Left colon (tissue), 2 donors: ENCODE measurements at regions of chr7 and their contacts with region 1.

Region 1: GRCh38 chr7:134140889-134141867 is 14.0 kb downstream of the LRGUK start:
- DNase-seq: peak; percentile 37 to 73
- ATAC-seq: peak; percentile 81

Region 2: GRCh38 chr7:134212576-134213546 is 71.7 kb after region 1 on chr7:
- intact Hi-C with region 1: no loop called
- DNase-seq: no peak
- ATAC-seq: no peak

Region 3: DNA sequence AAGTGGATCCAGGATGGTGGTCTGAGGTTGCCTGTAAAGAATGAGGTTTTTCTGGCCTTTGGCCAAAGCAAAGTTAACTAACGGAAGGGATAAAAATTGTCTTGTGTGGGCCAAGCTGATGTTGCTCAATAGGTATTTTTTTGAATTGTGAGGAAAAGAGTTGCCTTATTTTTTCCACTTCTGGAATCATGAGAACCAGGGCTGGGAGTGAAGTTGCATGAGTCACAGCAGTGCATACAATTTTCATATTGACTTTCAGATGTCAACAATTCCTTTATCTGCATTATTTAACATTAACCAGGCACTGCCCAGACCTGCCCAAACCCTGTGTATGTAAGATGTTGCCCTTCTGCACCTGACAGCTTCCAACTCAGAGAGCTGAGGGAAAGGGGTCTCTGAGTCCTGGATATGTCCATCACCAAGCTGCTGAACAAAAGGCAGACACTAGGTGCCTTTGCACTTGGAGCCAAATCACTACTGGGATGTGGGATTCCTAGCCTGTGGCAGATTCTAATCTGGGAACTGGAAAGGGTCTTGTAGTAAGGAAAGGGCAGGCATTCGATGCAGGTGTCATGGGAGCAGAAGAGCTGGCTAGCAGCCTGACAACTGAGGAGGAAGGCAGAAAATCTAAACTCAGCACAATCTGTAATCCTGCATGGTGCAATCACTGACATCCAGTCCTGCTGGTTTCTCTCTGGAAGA is 227.8 kb after region 1 on chr7:
- intact Hi-C with region 1: loop called in 1 of 2 experiments (anchors 10 kb)
- DNase-seq: no peak
- ATAC-seq: peak; percentile 76

Region 4: DNA sequence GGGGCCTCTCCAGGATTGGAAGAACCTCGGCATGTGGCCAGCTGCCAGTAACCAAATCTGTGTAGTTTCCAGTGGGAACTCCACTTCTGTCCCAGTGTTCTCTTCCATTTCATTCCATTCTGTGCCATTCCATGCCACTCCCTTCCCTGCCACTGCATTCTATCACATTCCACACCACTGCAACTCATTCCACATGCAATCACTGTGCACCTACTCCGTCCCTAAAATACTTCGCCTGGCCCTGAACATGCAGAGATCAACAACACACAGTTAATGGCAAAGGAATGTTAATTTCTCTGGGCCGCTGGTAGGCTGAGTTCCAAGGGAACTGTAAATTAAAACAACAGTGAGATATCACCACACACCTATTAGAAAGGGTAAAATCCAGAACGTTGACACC is 252.9 kb after region 1 on chr7:
- intact Hi-C with region 1: no loop called
- DNase-seq: no peak
- ATAC-seq: no peak